ENCODE measurements at regions of chr2 and their contacts with region 1.

Region 1: DNA sequence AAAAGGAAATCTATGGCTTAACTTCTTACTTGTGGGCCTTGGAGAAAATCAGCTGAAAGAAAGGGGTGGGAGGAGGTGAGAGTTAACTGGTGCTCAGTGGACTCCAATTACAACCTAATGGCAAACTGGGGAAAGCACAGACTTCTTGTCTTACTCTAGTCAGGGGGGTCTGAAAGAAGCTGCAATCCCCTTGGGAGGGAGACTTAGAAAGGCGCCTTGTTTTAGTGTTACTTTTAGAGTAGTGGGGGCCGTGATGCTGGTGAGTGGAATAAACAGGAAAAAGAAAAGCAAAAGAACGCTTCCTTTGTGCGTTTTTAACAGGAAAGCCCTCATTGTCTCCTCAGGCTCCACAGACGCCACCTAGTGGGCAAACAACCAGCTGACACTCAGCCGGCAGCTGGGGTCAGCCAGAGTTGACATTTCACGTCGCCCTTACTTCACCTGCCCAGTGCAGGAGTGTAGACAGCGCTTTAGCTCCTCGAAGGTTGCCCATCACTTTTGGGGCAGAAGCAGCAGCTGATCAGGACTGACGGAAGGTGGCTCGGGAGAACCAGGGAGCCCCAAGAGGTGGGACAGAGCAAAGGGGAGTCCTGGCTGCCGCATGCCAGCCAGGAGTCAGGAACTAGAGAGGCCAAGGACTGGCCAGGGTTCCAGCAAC is 55.9 kb upstream of the GORASP2 start:
- DNase-seq: peak; percentile 84
- CTCF ChIP-seq: peak; percentile 93

Region 2: DNA sequence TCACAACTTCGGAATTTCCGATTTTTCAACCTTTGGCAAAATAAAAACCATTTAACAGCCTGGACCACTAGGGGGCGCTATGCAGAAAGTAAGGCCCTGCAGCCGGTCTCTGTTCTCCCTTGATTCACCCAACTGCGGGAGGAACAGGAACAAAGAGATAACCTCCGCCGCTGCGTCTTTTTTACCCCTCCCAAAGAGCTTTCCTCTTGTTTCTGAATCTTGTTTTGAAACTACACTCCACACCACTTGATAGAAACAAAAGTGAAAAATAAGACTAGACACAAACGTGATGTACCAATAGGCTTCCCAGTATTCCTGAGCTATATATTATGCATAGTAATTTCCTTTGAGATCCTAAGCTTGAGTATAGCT is 464.0 kb before region 1 on chr2:
- CTCF ChIA-PET with region 1: interaction called, 11 read pairs
- POLR2A ChIA-PET with region 1: no interaction called
- DNase-seq: peak; percentile 56
- CTCF ChIP-seq: peak; percentile 60

Region 3: GRCh38 chr2:170862286-170862902 is 10.8 kb before region 1 on chr2:
- CTCF ChIA-PET with region 1: interaction called, 26 read pairs
- POLR2A ChIA-PET with region 1: no interaction called
- DNase-seq: no peak
- CTCF ChIP-seq: no peak

Region 4: GRCh38 chr2:170895023-170895757 is 22.0 kb after region 1 on chr2:
- CTCF ChIA-PET with region 1: interaction called, 33 read pairs
- POLR2A ChIA-PET with region 1: no interaction called
- DNase-seq: no peak
- CTCF ChIP-seq: no peak